Activated CD4-positive, alpha-beta T cell treated with anti-CD3 and anti-CD28 coated beads for 36 hours (primary cell): ENCODE measurements at regions of chr22 and their contacts with region 1.

Region 1: DNA sequence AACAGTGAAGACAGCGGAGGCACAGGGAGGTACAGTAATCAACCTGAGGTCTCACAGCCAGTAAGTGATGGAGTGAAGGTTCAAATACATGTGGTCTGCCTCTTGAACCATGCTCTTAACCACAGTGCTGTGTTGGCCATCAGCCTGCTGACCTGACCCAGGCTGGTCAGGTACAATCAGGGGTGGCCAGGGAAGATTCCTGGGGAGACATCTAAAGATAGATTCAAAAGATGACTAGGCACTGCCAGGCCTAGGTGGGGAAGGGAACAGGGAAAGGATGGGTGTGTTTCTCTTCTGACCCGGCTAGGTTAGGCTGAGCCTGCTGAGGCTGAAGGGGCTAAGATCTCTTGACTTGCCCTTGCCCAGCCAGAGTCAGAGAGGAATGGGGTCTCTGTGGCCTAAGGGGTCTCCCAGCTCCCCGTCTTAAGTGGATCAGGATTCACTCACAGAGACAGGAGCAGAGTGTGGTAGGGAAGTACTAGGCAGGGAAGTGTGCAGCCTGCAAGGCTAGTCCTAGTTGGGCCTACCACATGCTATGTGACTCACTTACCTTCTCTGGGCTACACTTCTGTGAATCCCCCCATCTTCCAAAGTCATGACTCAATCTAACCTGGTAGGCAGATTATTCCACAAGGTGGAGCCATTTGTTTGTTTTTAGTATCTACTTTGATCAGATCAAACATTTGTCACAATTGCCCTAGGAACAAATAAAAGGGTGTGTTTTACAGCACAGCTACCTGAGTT is 10.4 kb upstream of the SREBF2 start:
- DNase-seq: peak; percentile 57
- ATAC-seq: peak; percentile 97
- H3K4me3 Mint-ChIP-seq: no peak overlapping the region
- H3K27ac Mint-ChIP-seq: peak overlapping the region; percentile 87
- H3K4me1 Mint-ChIP-seq: peaks cover 36% of the 10 kb centered on the region
- H3K27me3 Mint-ChIP-seq: no peaks in the 10 kb centered on the region

Region 2: DNA sequence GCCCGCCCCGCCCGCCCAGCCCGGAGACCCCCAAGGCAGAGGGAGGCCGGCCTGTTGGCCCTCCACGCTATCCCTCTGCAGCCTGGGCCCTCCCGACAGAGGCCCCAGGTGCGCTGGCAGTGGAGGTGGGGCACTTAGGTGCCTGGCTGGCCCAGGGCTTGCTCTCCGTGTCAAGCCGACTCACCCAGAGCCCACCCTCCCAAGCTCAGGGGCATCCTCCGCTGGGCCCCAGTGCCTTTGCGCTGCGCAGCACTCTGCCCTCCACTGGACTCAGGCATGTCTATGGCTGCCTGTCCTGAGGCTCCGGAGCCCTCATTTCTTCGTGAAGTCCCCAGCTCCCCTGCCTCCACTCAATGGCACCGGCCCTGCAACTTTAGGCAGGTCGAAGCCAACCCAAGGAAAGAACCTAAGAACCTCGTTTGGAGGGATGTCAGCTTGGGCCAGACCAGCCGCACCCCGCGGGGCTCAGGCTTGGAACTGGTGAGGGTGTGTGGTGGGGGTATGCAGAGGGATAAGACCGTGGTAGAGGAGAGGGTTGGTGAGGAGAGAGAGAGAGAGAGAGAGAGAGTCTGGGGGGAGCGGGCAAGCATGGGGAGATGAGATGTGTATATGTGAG is 135.6 kb after region 1 on chr22:
- CTCF ChIA-PET with region 1: no interaction called
- POLR2A ChIA-PET with region 1: no interaction called
- intact Hi-C with region 1: loop called in 1 of 2 experiments (anchors 1 kb)
- DNase-seq: no peak
- ATAC-seq: peak; percentile 25
- H3K4me3 Mint-ChIP-seq: no peak overlapping the region
- H3K27ac Mint-ChIP-seq: no peak overlapping the region
- H3K4me1 Mint-ChIP-seq: peaks cover 2% of the 10 kb centered on the region
- H3K27me3 Mint-ChIP-seq: no peaks in the 10 kb centered on the region

Region 3: GRCh38 chr22:42468841-42469240 is 646.4 kb after region 1 on chr22:
- CTCF ChIA-PET with region 1: no interaction called
- POLR2A ChIA-PET with region 1: no interaction called
- intact Hi-C with region 1: no loop called
- DNase-seq: no peak
- ATAC-seq: no peak
- H3K4me3 Mint-ChIP-seq: no peak overlapping the region
- H3K27ac Mint-ChIP-seq: no peak overlapping the region
- H3K4me1 Mint-ChIP-seq: no peaks in the 10 kb centered on the region
- H3K27me3 Mint-ChIP-seq: peaks cover 2% of the 10 kb centered on the region